SK-N-SH (cell line): ENCODE measurements at regions of chr17 and their contacts with region 1.

Region 1: DNA sequence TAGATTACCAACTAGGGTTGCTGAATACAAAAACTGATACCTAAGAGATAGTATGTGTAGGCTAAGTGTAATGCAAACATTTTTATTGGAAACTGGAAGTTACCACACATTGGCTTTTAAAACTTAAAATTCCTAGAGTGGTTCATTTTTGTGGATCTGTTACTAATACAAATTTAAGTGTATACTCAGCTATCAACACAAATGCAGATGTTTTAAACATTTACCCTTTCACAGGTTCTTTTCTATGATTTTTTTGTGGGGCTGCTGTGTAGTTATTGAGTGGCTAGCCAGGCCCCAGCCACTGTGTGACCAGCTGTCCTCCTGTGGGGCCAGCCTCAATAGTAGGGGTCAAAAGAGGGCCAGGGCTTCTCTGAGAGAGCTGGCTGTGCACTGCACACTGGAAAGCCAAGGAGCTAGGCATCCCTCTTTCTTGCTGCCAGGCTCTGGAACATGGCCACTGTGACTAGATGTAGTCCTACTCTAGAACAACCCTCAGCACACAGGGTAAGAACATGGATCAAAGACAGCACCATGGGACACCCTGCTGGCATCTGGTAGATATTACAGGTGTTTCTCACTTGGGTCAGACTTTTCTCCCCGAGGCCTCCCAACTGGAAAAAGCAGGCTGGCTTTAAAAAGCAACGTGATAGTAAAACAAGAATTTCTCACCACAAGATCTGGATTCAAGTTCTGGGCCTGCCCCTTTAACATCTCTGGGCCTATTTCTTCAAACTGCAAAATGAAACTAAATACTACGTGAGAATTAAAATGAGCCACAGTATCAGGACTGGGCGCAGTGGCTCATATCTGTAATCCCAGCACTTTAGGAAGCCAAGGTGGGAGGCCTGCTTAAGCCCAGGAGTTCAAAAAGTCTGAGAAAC is 7.3 kb upstream of the VEZF1 start:
- DNase-seq: peak; percentile 79
- H3K4me3 ChIP-seq: no peak overlapping the region
- H3K27ac ChIP-seq: peak overlapping the region; percentile 18 to 33; a peak in 3 of 4 replicates
- H3K4me1 ChIP-seq: peaks cover 0 to 13% of the 10 kb centered on the region in 2 experiments; a peak in 2 of 4 replicates
- H3K27me3 ChIP-seq: no peaks in the 10 kb centered on the region
- CTCF ChIP-seq: peak; percentile 87
- EP300 ChIP-seq: no peak
- RAD21 ChIP-seq: peak; percentile 97

Region 2: DNA sequence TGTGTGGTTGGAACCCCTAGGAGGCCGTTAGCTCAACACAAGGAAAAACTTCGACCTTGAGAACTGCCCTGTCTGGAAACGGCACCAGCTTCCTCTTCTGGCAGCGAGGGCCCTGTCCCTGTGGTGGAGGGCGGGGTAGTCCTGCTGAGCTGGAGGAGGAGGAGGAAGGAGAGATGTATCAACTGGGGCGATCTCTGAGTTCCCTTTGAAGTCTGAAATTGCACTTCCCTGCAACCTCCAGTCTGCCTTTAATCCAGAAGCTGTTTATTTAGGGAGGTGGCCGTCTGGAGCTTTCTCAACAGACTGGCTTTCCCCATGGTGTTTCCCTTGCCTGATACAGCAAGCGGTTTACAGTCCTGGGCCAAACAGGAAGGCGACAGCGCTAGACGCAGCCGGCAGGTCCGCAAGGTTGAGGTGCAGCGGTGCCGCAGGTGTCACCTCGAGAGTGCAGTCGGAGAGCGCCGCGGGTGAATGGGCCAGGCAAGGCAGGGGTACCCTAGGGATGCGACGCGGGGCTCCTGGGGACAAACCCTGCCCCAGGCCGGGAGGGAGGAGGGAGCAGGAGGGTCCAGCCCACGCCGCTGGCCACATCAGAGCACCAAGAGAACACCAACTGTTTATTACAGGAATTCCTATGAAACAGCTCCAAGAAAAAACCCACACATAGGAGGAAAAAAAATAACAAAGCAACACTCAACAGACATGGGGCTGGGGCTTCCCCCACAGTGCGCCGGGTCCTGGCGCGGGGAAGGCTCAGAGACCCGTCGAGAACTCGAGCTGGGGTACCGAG is 134.1 kb before region 1 on chr17:
- CTCF ChIA-PET with region 1: interaction called, 1,002 read pairs
- POLR2A ChIA-PET with region 1: interaction called, 36 read pairs
- DNase-seq: peak; percentile 70
- H3K4me3 ChIP-seq: peak overlapping the region in 1 of 2 experiments; percentile 28; a peak in 1 of 4 replicates
- H3K27ac ChIP-seq: no peak overlapping the region; a peak in 1 of 4 replicates
- H3K4me1 ChIP-seq: peaks cover 14 to 22% of the 10 kb centered on the region in 2 experiments; a peak in 3 of 4 replicates
- H3K27me3 ChIP-seq: no peaks in the 10 kb centered on the region
- CTCF ChIP-seq: no peak
- EP300 ChIP-seq: no peak
- RAD21 ChIP-seq: no peak

Region 3: DNA sequence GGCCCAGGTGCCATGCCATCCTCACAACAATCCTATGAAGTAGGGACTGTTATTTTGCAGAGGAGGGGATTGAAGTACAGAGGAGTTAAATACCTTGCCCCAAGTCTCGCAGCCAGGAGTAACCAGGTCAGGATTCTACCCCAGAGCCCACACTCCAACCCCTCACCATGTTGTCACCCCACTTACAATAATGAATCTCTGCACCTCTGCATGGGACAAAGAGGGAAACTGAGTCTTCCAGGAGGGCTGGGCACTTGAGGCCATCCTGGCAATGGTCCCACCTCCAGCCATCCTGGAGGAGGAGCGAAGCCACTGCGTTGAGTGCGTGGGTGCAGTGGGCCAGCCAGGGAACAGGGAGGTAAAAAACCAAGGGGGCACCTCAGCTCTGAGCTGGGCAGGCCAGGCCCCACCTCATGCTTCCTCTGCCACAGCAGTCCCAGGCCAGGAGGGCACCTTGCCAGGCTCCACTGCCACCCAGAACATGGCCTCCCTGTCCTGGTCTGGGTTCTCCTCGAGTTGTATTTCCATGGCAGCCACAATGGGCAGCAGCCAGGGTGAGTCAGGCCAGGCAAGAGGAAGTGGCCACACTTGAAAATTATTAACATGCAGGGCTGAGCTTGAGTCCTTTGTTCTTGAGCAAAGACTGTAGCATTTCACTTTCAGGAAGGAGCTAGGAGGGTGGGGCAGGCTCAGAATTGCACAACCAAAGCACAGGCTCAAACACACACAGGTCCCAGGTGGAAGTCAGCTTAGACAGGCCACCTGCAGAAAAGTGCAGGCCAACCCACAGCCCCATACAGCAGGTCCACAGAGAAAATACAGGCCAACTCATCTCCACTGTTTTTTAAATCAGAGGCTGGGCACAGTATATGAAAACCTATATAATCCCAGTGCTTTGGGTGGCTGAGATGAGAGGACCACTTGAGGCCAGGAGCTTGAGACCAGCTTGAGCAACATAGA is 92.2 kb before region 1 on chr17:
- CTCF ChIA-PET with region 1: interaction called, 17 read pairs
- POLR2A ChIA-PET with region 1: interaction called, 3 read pairs
- DNase-seq: no peak
- H3K4me3 ChIP-seq: no peak overlapping the region
- H3K27ac ChIP-seq: peak overlapping the region; percentile 43 to 86
- H3K4me1 ChIP-seq: peaks cover 49 to 53% of the 10 kb centered on the region in 2 experiments; a peak in 3 of 4 replicates
- H3K27me3 ChIP-seq: no peaks in the 10 kb centered on the region
- CTCF ChIP-seq: no peak
- EP300 ChIP-seq: peak in 1 of 2 experiments; percentile 67; a peak in 1 of 4 replicates
- RAD21 ChIP-seq: no peak

Region 4: GRCh38 chr17:57946798-57947358 is 48.4 kb before region 1 on chr17:
- CTCF ChIA-PET with region 1: interaction called, 16 read pairs
- POLR2A ChIA-PET with region 1: no interaction called
- DNase-seq: no peak
- H3K4me3 ChIP-seq: 0 out of 4 replicates have a peak overlapping the region, but pooled peaks of 1 of the 2 experiments have one; percentile 3
- H3K27ac ChIP-seq: peak overlapping the region in 1 of 2 experiments; percentile 95; a peak in 2 of 4 replicates
- H3K4me1 ChIP-seq: peaks cover 26 to 70% of the 10 kb centered on the region in 2 experiments
- H3K27me3 ChIP-seq: no peaks in the 10 kb centered on the region
- CTCF ChIP-seq: no peak
- EP300 ChIP-seq: no peak
- RAD21 ChIP-seq: no peak

Region 5: GRCh38 chr17:57982452-57983170 is 12.7 kb before region 1 on chr17:
- CTCF ChIA-PET with region 1: interaction called, 17 read pairs
- POLR2A ChIA-PET with region 1: no interaction called
- DNase-seq: no peak
- H3K4me3 ChIP-seq: no peak overlapping the region
- H3K27ac ChIP-seq: no peak overlapping the region
- H3K4me1 ChIP-seq: peaks cover 17 to 43% of the 10 kb centered on the region in 2 experiments
- H3K27me3 ChIP-seq: no peaks in the 10 kb centered on the region
- CTCF ChIP-seq: no peak
- EP300 ChIP-seq: no peak
- RAD21 ChIP-seq: no peak

Region 6: GRCh38 chr17:58052945-58053846 is 57.9 kb after region 1 on chr17:
- CTCF ChIA-PET with region 1: interaction called, 15 read pairs
- POLR2A ChIA-PET with region 1: no interaction called
- DNase-seq: no peak
- H3K4me3 ChIP-seq: no peak overlapping the region
- H3K27ac ChIP-seq: no peak overlapping the region
- H3K4me1 ChIP-seq: peaks cover 0 to 4% of the 10 kb centered on the region in 2 experiments; a peak in 1 of 4 replicates
- H3K27me3 ChIP-seq: peaks cover 13% of the 10 kb centered on the region; the same call in 1 of the 2 replicates
- CTCF ChIP-seq: no peak
- EP300 ChIP-seq: no peak
- RAD21 ChIP-seq: no peak